Heart left ventricle (tissue), 16 donors: ENCODE measurements at regions of chr9 and their contacts with region 1.

Region 1: GRCh38 chr9:34796924-34797323 is 87.0 kb upstream of the CCL21 start:
- DNase-seq: no peak
- ATAC-seq: no peak
- H3K4me3 ChIP-seq: no peak overlapping the region
- H3K27ac ChIP-seq: no peak overlapping the region
- H3K4me1 ChIP-seq: no peaks in the 10 kb centered on the region
- H3K27me3 ChIP-seq: peaks cover 0 to 28% (median 0%) of the 10 kb centered on the region in 9 donors
- CTCF ChIP-seq: no peak
- POLR2A ChIP-seq: no peak

Region 2: GRCh38 chr9:34737677-34738260 is 59.2 kb before region 1 on chr9:
- intact Hi-C with region 1: loop called in 1 of 10 experiments (anchors 10 kb)
- DNase-seq: no peak
- ATAC-seq: no peak
- H3K4me3 ChIP-seq: no peak overlapping the region
- H3K27ac ChIP-seq: no peak overlapping the region
- H3K4me1 ChIP-seq: peaks cover 0 to 4% (median 0%) of the 10 kb centered on the region in 12 donors
- H3K27me3 ChIP-seq: no peaks in the 10 kb centered on the region
- CTCF ChIP-seq: no peak
- POLR2A ChIP-seq: no peak

Region 3: GRCh38 chr9:35085078-35085477 is 288.2 kb after region 1 on chr9:
- intact Hi-C with region 1: no loop called
- DNase-seq: no peak
- ATAC-seq: no peak
- H3K4me3 ChIP-seq: no peak overlapping the region
- H3K27ac ChIP-seq: no peak overlapping the region
- H3K4me1 ChIP-seq: peaks cover 0 to 8% (median 1%) of the 10 kb centered on the region in 12 donors
- H3K27me3 ChIP-seq: no peaks in the 10 kb centered on the region
- CTCF ChIP-seq: no peak
- POLR2A ChIP-seq: no peak